AG04449 (cell line): ENCODE measurements at regions of chr9 and their contacts with region 1.

Region 1: DNA sequence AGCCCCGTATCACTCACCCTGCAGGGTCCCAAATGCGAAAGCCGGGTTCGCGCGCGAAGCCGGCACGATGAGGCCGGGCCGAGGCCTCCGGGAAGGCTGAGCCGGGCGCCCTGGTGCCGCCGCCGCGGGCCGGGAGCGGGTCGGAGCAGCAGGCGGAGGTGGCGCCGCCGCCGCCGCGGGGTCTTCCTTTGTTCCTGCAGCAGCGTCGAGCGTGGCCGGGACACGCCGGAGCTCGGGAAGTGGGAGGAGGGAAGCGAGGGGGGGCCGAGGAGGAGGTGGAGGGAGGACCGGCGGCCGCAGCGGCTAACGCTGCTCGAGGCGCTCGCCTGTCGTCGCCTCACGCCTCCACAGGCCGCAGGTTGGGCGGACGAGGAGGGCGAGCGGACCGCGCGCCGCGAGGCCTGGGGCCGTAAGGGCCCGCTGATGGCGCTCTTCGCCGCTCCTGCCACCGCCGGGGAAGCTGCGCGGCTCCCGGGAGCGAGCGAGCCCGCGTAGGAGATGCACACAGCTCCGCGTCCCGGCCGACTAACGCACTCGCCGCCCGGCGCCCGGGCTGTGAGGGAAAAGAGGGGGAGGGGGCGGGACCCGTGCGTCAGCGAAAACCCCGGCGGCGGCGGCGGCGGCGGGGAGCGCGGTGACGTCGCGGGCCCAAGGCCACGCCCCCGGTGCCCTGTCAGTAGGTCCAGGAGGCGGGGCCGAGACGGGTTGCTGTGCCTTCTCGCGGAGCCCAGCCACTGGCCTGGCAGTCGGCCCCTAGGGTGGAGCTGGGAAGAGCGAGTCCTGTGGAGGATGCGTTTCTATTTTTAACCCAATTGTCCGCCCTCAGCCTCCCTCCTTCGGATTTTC is at the start of gene ZFAND5:
- DNase-seq: peak; percentile 89
- H3K4me3 ChIP-seq: peak within 1 kb of the TSS; percentile 77
- CTCF ChIP-seq: no peak

Region 2: GRCh38 chr9:72322259-72322658 is 42.6 kb before region 1 on chr9:
- CTCF ChIA-PET with region 1: no interaction called
- POLR2A ChIA-PET with region 1: no interaction called
- DNase-seq: no peak
- H3K4me3 ChIP-seq: no peak overlapping the region
- CTCF ChIP-seq: no peak

Region 3: DNA sequence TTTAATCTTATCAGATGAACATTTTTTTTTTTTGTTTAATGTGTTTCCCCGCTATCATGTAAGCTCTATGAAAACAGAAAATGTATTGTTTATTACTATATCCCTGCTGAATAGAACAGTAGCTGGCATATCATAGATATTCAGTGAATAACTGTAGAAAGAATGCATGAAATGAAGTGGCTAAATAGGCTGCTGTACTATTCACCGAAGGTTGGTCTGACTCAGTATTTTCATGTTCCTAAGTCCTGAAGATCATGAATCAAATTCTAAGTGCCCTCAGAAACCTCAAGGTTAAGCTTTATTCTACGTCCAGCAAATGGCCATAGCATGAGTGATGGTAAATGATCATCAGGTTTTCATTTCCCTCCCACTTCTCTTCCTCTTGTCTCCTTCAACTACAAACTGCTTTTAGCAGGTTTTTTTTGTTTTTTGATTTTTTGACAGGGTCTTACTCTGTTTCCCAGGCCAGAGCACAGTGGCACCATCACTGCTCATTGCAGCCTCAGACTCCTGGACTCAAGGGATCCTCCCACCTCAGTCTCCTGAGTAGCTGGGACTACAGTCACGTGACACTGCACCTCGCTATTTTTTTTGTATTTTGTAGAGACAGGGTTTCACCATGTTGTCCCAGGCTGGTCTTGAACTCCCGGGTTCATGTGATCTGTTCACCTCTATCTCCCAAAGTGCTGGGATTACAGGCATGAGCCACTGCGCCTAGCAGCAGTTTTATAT is 19.2 kb after region 1 on chr9:
- CTCF ChIA-PET with region 1: interaction called, 3 read pairs
- POLR2A ChIA-PET with region 1: interaction called, 51 read pairs
- DNase-seq: peak; percentile 77
- H3K4me3 ChIP-seq: no peak overlapping the region
- CTCF ChIP-seq: no peak

Region 4: DNA sequence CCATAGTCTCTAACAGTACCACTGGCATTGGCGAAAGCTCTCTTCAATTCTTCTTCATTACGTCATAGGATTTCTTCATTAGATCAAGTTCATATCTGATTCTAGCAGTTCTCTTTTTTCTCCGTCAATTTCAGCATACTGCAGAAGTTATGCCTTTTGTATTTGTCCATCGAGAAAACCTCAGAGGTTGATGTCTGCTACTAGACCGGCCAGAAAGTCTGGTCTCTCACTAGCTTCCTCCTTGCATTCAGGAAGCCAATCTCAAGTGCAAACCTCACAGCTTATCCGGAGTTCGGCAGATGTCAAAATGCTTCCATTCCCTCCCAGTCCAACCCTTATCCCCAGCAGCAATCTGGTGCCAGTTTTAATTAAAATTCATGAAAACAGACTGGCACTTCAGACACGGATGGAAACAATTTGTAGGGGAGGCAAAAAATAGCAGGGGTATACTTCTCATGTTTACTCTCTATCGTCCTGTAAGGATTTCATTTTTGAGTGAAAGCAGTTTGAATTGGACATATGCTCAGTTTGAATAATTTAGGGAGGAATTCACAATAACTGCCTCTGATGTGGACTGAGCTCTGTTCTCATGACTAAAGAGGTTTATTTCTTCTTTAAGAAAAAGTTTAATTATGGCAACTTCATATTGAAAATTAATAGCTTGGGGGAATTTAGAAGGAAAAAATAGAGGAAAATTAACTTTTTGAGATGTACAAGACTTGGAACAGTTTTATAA is 100.1 kb after region 1 on chr9:
- CTCF ChIA-PET with region 1: no interaction called
- POLR2A ChIA-PET with region 1: interaction called, 11 read pairs
- DNase-seq: no peak
- H3K4me3 ChIP-seq: no peak overlapping the region
- CTCF ChIP-seq: no peak

Region 5: DNA sequence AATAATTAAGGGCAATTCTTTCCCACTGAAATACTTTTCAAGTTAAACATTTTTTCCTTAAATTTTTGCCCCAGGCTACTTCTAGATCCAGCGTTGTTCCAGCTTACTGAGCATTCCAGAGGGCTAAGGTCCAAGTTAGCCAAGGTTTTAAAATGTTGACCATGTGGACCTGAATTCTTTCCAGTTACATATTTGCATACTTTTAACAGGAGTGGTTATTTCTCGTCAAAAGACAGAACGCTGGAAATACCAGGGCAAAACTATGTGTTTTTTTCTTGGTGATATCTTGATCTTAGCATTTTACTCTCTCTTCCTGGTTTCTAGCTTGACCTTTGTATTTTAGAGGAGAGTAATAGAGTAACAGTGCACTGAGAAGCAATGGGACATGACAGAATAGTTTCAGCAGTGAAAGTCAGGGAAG is 189.3 kb after region 1 on chr9:
- CTCF ChIA-PET with region 1: interaction called, 4 read pairs
- POLR2A ChIA-PET with region 1: interaction called, 21 read pairs
- DNase-seq: peak; percentile 98
- H3K4me3 ChIP-seq: no peak overlapping the region
- CTCF ChIP-seq: no peak

Region 6: GRCh38 chr9:72592502-72593403 is 227.9 kb after region 1 on chr9:
- CTCF ChIA-PET with region 1: interaction called, 74 read pairs
- POLR2A ChIA-PET with region 1: interaction called, 34 read pairs
- DNase-seq: no peak
- H3K4me3 ChIP-seq: no peak overlapping the region
- CTCF ChIP-seq: peak; percentile 59